SK-N-SH (cell line): ENCODE measurements at regions of chr11 and their contacts with region 1.

Region 1: GRCh38 chr11:2151500-2152257 is 9.3 kb downstream of the INS start:
- DNase-seq: peak; percentile 90
- H3K4me3 ChIP-seq: peak overlapping the region in 1 of 2 experiments; percentile 5; a peak in 1 of 4 replicates
- H3K27ac ChIP-seq: peak overlapping the region in 1 of 2 experiments; percentile 4; a peak in 1 of 4 replicates
- H3K4me1 ChIP-seq: peaks cover 0 to 21% of the 10 kb centered on the region in 2 experiments; a peak in 1 of 4 replicates
- H3K27me3 ChIP-seq: peaks cover 28% of the 10 kb centered on the region
- CTCF ChIP-seq: peak; percentile 70
- EP300 ChIP-seq: no peak
- RAD21 ChIP-seq: peak; percentile 85

Region 2: DNA sequence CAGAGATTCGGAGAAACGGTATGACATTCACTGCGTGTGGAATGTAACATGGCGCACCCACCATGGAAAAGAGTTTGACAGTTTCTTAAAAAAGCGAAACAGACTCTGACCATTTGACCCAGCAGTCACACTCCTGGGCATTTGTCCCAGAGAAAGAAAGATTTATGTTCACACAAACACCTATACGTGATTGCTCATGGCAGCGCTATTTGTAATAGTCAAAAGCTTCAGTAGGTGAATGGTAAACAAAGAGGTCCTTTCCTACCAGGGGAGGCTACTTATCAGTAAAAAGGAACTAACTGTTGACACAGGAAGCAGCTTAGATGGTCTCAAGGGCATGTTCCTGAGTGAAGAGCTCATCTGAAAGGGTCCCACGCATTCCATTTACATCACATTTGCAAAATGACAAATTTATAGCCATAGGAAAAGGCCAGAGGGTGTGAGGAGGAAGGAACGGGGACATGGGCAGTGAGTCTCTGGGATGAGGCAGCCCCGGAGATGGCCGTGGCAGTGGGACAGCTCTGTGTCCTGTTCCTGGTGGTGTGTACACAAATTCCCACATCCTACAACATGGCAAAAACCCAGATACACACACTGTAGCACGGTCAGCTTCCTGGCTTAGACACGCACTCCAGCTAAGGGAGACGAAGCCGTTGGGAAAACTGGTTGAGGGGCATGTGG is 469.3 kb before region 1 on chr11:
- CTCF ChIA-PET with region 1: interaction called, 12 read pairs
- POLR2A ChIA-PET with region 1: no interaction called
- DNase-seq: no peak
- H3K4me3 ChIP-seq: no peak overlapping the region
- H3K27ac ChIP-seq: no peak overlapping the region
- H3K4me1 ChIP-seq: no peaks in the 10 kb centered on the region
- H3K27me3 ChIP-seq: no peaks in the 10 kb centered on the region
- CTCF ChIP-seq: no peak
- EP300 ChIP-seq: no peak
- RAD21 ChIP-seq: no peak

Region 3: GRCh38 chr11:1882519-1883238 is 269.0 kb before region 1 on chr11:
- CTCF ChIA-PET with region 1: interaction called, 179 read pairs
- POLR2A ChIA-PET with region 1: interaction called, 7 read pairs
- DNase-seq: peak; percentile 97
- H3K4me3 ChIP-seq: no peak overlapping the region; a peak in 1 of 4 replicates
- H3K27ac ChIP-seq: peak overlapping the region in 1 of 2 experiments; percentile 72; a peak in 1 of 4 replicates
- H3K4me1 ChIP-seq: peaks cover 0 to 19% of the 10 kb centered on the region in 2 experiments; a peak in 1 of 4 replicates
- H3K27me3 ChIP-seq: no peaks in the 10 kb centered on the region
- CTCF ChIP-seq: peak; percentile 82
- EP300 ChIP-seq: no peak
- RAD21 ChIP-seq: peak; percentile 89

Region 4: GRCh38 chr11:1959786-1960185 is 191.9 kb before region 1 on chr11:
- CTCF ChIA-PET with region 1: interaction called, 215 read pairs
- POLR2A ChIA-PET with region 1: interaction called, 10 read pairs
- DNase-seq: no peak
- H3K4me3 ChIP-seq: no peak overlapping the region
- H3K27ac ChIP-seq: no peak overlapping the region; a peak in 1 of 4 replicates
- H3K4me1 ChIP-seq: no peaks in the 10 kb centered on the region; a peak in 1 of 4 replicates
- H3K27me3 ChIP-seq: no peaks in the 10 kb centered on the region
- CTCF ChIP-seq: no peak
- EP300 ChIP-seq: no peak
- RAD21 ChIP-seq: no peak

Region 5: GRCh38 chr11:2092956-2093412 is 58.7 kb before region 1 on chr11:
- CTCF ChIA-PET with region 1: interaction called, 18 read pairs
- POLR2A ChIA-PET with region 1: no interaction called
- DNase-seq: peak; percentile 55
- H3K4me3 ChIP-seq: no peak overlapping the region
- H3K27ac ChIP-seq: no peak overlapping the region; a peak in 1 of 4 replicates
- H3K4me1 ChIP-seq: peaks cover 0 to 10% of the 10 kb centered on the region in 2 experiments; a peak in 1 of 4 replicates
- H3K27me3 ChIP-seq: no peaks in the 10 kb centered on the region
- CTCF ChIP-seq: no peak
- EP300 ChIP-seq: no peak
- RAD21 ChIP-seq: no peak

Region 6: GRCh38 chr11:2186669-2187279 is 35.1 kb after region 1 on chr11:
- CTCF ChIA-PET with region 1: interaction called, 19 read pairs
- POLR2A ChIA-PET with region 1: interaction called, 3 read pairs
- DNase-seq: peak; percentile 80
- H3K4me3 ChIP-seq: no peak overlapping the region
- H3K27ac ChIP-seq: no peak overlapping the region; a peak in 1 of 4 replicates
- H3K4me1 ChIP-seq: peaks cover 0 to 39% of the 10 kb centered on the region in 2 experiments; a peak in 1 of 4 replicates
- H3K27me3 ChIP-seq: no peaks in the 10 kb centered on the region
- CTCF ChIP-seq: peak; percentile 17; the same call in 1 of the 2 replicates
- EP300 ChIP-seq: no peak
- RAD21 ChIP-seq: peak; percentile 73

Region 7: GRCh38 chr11:2277008-2277346 is 125.3 kb after region 1 on chr11:
- CTCF ChIA-PET with region 1: no interaction called
- POLR2A ChIA-PET with region 1: no interaction called
- DNase-seq: no peak
- H3K4me3 ChIP-seq: no peak overlapping the region
- H3K27ac ChIP-seq: no peak overlapping the region
- H3K4me1 ChIP-seq: no peaks in the 10 kb centered on the region
- H3K27me3 ChIP-seq: peaks cover 14% of the 10 kb centered on the region; the same call in 1 of the 2 replicates
- CTCF ChIP-seq: no peak
- EP300 ChIP-seq: no peak
- RAD21 ChIP-seq: no peak